Sciatic nerve (tissue), 2 donors: ENCODE measurements at regions of chr9 and their contacts with region 1.

Region 1: DNA sequence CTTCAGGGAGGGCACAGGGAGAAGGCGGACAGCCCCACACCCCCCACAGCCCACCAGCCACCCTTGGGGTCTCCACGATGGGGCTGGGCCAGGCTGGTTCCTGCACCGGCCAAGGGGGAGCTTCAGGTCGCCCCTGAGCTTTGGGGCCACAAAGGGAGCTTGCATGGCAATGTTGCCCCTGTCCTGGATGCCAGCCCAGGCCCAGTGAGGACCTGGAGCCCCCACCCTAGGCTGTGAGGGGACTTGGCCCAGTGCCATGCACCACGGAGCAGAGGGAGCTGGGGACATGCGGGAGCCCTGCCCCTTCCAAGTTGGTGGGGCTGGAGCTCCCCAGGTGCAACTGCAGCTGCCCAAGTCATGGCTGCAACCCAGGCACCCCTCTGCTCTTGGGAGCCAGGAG is 18.4 kb downstream of the TMEM38B start:
- DNase-seq: no peak
- ATAC-seq: no peak

Region 2: GRCh38 chr9:104817437-104817836 is 895.3 kb before region 1 on chr9:
- intact Hi-C with region 1: no loop called
- DNase-seq: no peak
- ATAC-seq: no peak

Region 3: GRCh38 chr9:105693435-105694189 is 19.2 kb before region 1 on chr9:
- intact Hi-C with region 1: loop called (anchors 1 kb)
- DNase-seq: no peak
- ATAC-seq: no peak

Region 4: GRCh38 chr9:105737205-105737604 is 24.4 kb after region 1 on chr9:
- intact Hi-C with region 1: no loop called
- DNase-seq: no peak
- ATAC-seq: no peak